ENCODE measurements at regions of chr17 and their contacts with region 1.

Region 1: GRCh38 chr17:19867064-19867313 is 747 bp downstream of the ULK2 start:
- DNase-seq: peak; percentile 54
- ATAC-seq: peak; percentile 64
- H3K4me3 ChIP-seq: peak overlapping the region; percentile 66
- H3K27ac ChIP-seq: peak overlapping the region; percentile 56
- H3K4me1 ChIP-seq: no peaks in the 10 kb centered on the region
- H3K27me3 ChIP-seq: no peaks in the 10 kb centered on the region
- CTCF ChIP-seq: peak; percentile 31
- POLR2A ChIP-seq: no peak
- RAD21 ChIP-seq: no peak; the same call in 1 of the 2 replicates

Region 2: GRCh38 chr17:19904924-19905323 is 37.9 kb after region 1 on chr17:
- CTCF ChIA-PET with region 1: interaction called, 3 read pairs
- POLR2A ChIA-PET with region 1: no interaction called
- dilution Hi-C with region 1: no loop called
- in situ Hi-C with region 1: no loop called
- intact Hi-C with region 1: loop called (anchors 5 kb)
- DNase-seq: no peak
- ATAC-seq: no peak
- H3K4me3 ChIP-seq: no peak overlapping the region
- H3K27ac ChIP-seq: peak overlapping the region; percentile 97; the same call in 1 of the 2 replicates
- H3K4me1 ChIP-seq: peaks cover 15% of the 10 kb centered on the region
- H3K27me3 ChIP-seq: no peaks in the 10 kb centered on the region
- CTCF ChIP-seq: no peak
- POLR2A ChIP-seq: no peak
- RAD21 ChIP-seq: no peak